MCF 10A (cell line): ENCODE measurements at regions of chr1 and their contacts with region 1.

Region 1: GRCh38 chr1:77683160-77684148 is 996 bp upstream of the ZZZ3 start:
- DNase-seq: peak; percentile 89
- H3K4me3 Mint-ChIP-seq: peak overlapping the region; percentile 89
- H3K27ac Mint-ChIP-seq: peak overlapping the region; percentile 99
- H3K4me1 Mint-ChIP-seq: peaks cover 28% of the 10 kb centered on the region
- H3K27me3 Mint-ChIP-seq: no peaks in the 10 kb centered on the region
- CTCF ChIP-seq: peak; percentile 94

Region 2: DNA sequence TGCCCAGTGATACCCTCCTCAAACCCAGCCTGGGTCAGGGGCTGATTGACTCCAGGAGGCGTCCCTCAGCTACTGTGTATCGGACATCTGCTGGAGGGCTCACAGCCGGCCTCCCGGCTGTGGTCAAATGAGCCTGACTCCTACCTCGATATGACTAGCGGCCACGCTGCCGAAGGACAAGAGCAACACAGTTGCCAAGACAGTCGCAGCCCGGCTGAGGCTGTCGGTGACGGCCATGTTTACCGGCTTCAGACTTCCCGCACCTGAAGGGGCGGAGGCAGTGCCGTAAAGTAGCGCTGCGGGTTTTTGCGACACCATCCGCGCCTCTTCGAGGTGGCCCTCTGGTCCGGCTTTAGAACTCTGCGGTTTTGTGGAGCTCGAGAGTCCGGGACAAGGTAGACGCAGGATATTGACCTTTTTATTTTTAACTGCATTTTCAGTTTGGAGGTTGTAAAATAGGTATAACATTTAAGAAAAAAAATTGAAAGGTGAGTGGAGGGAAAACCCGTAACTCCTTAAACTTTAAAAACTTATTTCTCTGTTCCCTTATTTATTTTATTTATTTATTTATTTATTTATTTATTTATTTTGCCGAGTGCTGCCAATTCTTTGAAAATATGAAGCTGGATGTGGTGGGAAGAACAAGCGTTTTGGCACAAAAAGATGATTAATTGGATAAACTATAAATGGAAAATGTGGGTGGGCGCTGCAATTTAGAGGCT is 464.1 kb before region 1 on chr1 and contains the start of gene PIGK:
- CTCF ChIA-PET with region 1: no interaction called
- POLR2A ChIA-PET with region 1: no interaction called
- intact Hi-C with region 1: loop called (anchors 2 kb)
- DNase-seq: peak; percentile 88
- H3K4me3 Mint-ChIP-seq: peak within 1 kb of the TSS; percentile 94
- H3K27ac Mint-ChIP-seq: peak within 1 kb of the TSS; percentile 77
- H3K4me1 Mint-ChIP-seq: peaks cover 23% of the 10 kb centered on the region
- H3K27me3 Mint-ChIP-seq: no peaks in the 10 kb centered on the region
- CTCF ChIP-seq: no peak
- total RNA-seq, gene PIGK: 22.9 TPM in 2 replicates

Region 3: DNA sequence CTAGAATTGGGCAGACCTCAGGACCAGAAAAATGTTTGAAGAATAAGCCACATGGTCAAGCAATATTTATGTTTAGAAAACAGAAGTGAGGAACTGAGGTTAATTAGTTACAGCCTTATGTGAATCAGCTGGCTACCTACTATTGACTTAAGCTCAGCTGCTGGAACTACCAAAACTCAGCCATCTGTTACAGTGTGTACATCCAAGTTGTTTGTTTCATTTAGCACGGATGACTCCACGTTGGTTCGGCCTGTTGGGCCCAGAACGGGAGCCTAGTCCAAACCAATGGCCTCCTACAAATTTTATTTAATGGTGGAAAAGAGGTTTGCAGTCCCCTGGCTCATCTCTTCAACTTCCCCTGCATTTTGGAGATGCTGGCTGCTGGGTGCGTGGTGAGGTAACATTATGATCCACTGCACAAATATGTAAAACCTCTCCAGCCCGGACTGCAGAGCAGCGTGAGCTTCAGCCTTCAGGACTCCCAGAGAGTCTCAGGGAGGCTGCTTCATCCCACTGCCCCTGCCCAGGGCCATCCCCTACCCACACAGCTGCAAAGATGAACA is 144.4 kb before region 1 on chr1:
- CTCF ChIA-PET with region 1: interaction called, 3 read pairs
- POLR2A ChIA-PET with region 1: interaction called, 8 read pairs
- intact Hi-C with region 1: loop called (anchors 2 kb)
- DNase-seq: peak; percentile 73
- H3K4me3 Mint-ChIP-seq: peak overlapping the region; percentile 60
- H3K27ac Mint-ChIP-seq: peak overlapping the region; percentile 93
- H3K4me1 Mint-ChIP-seq: peaks cover 44% of the 10 kb centered on the region
- H3K27me3 Mint-ChIP-seq: no peaks in the 10 kb centered on the region
- CTCF ChIP-seq: no peak

Region 4: DNA sequence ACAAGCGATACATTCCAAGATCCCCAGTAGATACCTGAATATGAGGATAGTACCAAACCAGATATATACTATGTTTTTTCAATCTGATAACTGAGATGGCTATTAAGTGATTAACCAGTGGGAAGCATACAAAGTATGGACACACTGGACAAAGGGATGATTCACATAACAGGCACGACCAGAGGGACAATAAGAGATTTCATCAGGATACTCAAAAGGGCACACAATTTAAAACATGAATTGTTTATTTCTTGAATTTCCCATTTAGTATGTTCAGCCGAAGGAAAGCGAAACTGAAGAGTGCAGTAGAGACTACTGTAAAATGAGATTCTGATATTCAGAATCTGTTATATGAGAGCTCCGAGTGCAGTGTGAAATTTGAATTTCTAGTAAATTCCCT is 11.6 kb before region 1 on chr1:
- CTCF ChIA-PET with region 1: no interaction called
- POLR2A ChIA-PET with region 1: interaction called, 66 read pairs
- intact Hi-C with region 1: no loop called
- DNase-seq: peak; percentile 8
- H3K4me3 Mint-ChIP-seq: no peak overlapping the region
- H3K27ac Mint-ChIP-seq: no peak overlapping the region
- H3K4me1 Mint-ChIP-seq: peaks cover 19% of the 10 kb centered on the region
- H3K27me3 Mint-ChIP-seq: no peaks in the 10 kb centered on the region
- CTCF ChIP-seq: no peak